ENCODE measurements at regions of chr6 and their contacts with region 1.

Region 1: GRCh38 chr6:111605100-111605751 is 452 bp downstream of the TRAF3IP2 start:
- DNase-seq: peak; percentile 89
- ATAC-seq: peak; percentile 73

Region 2: DNA sequence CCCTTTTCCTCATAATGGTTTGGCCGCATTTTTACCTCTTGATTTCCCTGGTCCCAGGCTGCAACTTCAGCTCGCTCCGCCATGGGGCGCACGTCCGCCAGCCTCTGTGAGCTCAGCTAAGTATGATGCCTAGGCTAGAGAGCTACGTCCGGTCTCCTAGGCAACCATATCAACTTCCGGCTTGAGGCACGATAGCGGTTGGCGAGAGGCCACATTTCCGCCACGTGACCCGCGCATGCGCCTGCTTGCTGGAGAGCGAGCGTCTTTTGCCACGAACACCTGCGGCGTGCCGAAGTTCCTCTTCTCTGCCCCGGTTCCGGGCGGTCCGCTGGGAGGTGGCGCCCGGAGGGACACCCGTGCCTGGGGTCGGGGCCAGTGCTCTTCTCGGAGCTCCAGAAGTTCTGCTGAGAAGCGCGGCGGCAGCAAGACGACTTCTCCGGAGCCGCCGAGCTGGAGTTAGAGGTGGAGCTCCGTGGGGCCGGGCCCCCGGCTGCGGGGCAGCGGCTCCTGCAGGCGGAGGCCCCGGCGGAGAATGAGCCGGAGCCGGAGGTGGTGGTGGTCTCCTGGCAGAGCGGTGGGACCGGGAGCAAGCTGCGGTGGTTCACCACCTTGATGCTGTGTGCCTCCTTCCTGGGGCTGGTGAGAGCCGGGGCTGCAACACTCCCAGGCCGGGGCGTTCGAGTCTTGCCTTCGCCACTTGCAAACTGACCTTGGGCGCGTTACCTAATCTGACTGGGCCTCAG is 346.0 kb before region 1 on chr6:
- intact Hi-C with region 1: loop called (anchors 10 kb)
- DNase-seq: peak; percentile 99
- ATAC-seq: peak; percentile 99

Region 3: DNA sequence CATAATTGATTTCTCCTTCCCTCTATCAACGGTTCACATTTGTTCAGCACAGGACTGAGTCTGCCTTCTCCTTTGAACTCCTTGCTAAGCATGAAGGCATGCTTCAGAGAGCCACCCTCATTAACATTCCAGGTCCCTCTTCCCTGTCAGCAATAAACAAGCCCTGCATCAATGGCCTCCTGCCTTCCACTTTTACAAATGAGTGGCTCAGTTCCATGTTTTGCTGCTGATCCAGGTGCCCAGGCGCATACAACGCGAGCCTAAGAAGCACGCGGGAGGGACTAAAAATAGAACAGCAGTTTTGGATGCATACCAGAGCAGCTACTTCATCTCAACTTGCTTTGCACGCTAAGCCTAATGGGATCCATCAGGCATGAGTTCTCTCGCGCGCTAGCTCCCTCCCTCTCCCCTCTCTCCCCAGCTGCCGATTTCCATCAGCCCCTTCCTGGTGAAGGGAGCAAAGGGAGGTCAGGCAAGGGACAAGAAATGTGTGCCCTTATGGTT is 52.9 kb before region 1 on chr6:
- intact Hi-C with region 1: loop called (anchors 5 kb)
- DNase-seq: no peak
- ATAC-seq: peak; percentile 88

Region 4: GRCh38 chr6:111569951-111570350 is 35.3 kb before region 1 on chr6:
- intact Hi-C with region 1: loop called (anchors 2 kb)
- DNase-seq: no peak
- ATAC-seq: no peak

Region 5: GRCh38 chr6:111642463-111643158 is 37.4 kb after region 1 on chr6:
- intact Hi-C with region 1: loop called (anchors 5 kb)
- DNase-seq: no peak
- ATAC-seq: peak; percentile 87

Region 6: GRCh38 chr6:111683749-111684267 is 78.6 kb after region 1 on chr6:
- intact Hi-C with region 1: no loop called
- DNase-seq: no peak
- ATAC-seq: peak; percentile 71

Measured in Right ventricle myocardium inferior (tissue), 1 donor.